Tibial artery (tissue), 4 donors: ENCODE measurements at regions of chr9 and their contacts with region 1.

Region 1: DNA sequence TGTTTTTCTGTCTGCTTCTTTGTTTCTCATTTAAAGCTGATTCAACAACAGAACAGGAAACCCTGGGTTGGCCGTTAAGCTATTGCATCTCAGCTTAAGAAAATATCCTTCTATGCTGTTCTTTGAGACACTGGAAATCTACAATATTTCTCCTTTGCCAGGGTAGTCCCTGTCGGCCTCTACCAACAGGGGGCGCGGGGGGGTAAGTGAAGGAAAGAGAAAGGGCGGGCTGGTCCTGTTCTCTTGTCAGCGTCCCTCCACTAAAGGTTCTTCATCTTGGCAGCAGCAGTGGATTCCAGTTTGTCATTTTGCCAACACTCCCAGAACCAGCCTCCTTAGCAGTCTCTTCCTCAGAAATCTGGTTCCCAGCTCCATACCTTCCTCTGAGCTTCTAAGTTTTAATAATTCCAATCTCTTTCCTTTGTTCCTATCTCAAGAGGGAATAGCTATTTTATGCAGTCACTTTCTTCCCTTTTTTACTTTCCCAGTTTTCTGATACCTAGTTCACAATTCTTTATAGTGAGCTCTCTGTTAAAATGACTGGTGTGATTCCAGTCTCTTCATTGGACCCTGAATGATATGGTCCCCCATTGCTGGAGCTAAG is 222.3 kb downstream of the GLIS3 start:
- DNase-seq: peak; percentile 90 to 92
- H3K4me3 ChIP-seq: no peak overlapping the region
- H3K27ac ChIP-seq: no peak overlapping the region
- H3K4me1 ChIP-seq: peaks cover 0 to 11% (median 0%) of the 10 kb centered on the region in 4 donors
- H3K27me3 ChIP-seq: no peaks in the 10 kb centered on the region
- CTCF ChIP-seq: peak; percentile 71 to 77

Region 2: GRCh38 chr9:4228606-4229005 is 151.0 kb after region 1 on chr9:
- intact Hi-C with region 1: loop called (anchors 10 kb)
- DNase-seq: no peak
- H3K4me3 ChIP-seq: no peak overlapping the region
- H3K27ac ChIP-seq: no peak overlapping the region
- H3K4me1 ChIP-seq: peaks cover 0 to 5% (median 0%) of the 10 kb centered on the region in 4 donors
- H3K27me3 ChIP-seq: no peaks in the 10 kb centered on the region
- CTCF ChIP-seq: peak; percentile 44 to 49